Breast epithelium (tissue), 4 donors: ENCODE measurements at regions of chr9 and their contacts with region 1.

Region 1: GRCh38 chr9:90523958-90524357 is 118.7 kb downstream of the DIRAS2 start:
- DNase-seq: no peak
- H3K4me3 ChIP-seq: no peak overlapping the region
- H3K27ac ChIP-seq: no peak overlapping the region
- H3K4me1 ChIP-seq: no peaks in the 10 kb centered on the region
- H3K27me3 ChIP-seq: no peaks in the 10 kb centered on the region
- CTCF ChIP-seq: no peak
- POLR2A ChIP-seq: no peak

Region 2: GRCh38 chr9:90546229-90546641 is 22.3 kb after region 1 on chr9:
- intact Hi-C with region 1: loop called (anchors 2 kb)
- DNase-seq: no peak
- H3K4me3 ChIP-seq: no peak overlapping the region
- H3K27ac ChIP-seq: no peak overlapping the region
- H3K4me1 ChIP-seq: no peaks in the 10 kb centered on the region
- H3K27me3 ChIP-seq: no peaks in the 10 kb centered on the region
- CTCF ChIP-seq: no peak
- POLR2A ChIP-seq: no peak